ENCODE measurements at regions of chr7 and their contacts with region 1.

Region 1: DNA sequence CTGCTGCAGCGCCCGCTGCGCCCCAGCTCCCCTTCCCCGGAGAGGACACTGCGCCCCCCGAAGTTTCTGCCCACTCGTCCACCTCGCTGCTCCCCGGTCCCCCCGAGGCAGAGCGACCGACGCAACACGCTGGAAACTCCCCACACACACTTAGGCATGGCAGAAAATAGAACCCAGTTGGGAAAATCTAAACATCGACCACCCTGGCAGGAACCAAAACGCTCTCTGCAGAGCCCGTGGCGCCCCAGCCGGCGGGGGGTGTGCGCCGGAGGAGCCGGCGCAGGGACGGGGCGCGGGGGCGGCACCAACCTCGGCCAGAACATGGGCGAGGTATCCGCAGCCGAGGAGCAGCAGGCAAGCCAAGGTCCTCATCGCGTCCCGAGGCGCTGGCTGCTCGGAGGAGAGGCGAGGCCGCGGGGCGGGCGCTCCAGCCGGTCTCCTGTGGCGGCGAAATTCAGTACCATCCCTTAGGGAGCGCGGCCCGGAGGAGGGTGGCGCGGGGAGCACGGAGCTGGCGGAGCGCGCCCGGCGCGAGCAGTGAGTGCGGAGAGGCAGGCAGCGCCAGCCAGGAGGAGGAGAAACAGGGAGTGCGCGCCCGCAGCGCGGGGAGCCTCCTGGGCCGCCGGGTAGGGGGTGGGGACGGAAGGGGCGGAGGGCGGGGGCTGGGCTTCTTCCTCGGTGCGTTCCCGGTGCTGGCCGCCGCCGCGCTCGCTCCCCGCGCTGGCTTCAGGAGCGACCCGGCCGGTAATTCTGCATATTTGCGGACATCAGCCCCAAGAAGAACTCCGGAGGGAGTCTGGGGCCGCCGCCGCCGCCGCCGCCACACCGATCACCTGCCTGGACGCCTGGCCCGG is 789 bp downstream of the PDGFA start:
- DNase-seq: peak; percentile 92

Region 2: DNA sequence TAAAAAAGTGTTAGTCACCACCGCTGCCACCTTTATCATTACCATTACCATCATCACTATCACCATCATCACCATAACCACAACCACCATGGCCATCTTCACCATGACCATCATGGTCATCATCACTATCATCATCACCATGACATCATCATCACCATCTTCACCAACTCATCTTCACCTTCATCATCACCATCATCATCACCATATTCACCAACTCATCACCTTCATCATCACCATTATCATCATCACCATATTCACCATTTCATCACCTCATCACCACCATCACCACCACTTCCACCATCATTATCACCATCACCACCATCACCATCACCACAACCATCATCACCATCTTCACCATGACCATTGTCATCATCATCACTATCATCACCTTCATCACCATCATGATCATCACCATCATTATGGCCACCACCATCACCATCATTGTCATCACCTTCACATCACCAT is 47.3 kb after region 1 on chr7:
- intact Hi-C with region 1: loop called in 1 of 2 experiments (anchors 1 kb)
- DNase-seq: no peak

Region 3: GRCh38 chr7:668139-668931 is 149.5 kb after region 1 on chr7:
- intact Hi-C with region 1: loop called in 1 of 2 experiments (anchors 10 kb)
- DNase-seq: peak; percentile 78

Region 4: DNA sequence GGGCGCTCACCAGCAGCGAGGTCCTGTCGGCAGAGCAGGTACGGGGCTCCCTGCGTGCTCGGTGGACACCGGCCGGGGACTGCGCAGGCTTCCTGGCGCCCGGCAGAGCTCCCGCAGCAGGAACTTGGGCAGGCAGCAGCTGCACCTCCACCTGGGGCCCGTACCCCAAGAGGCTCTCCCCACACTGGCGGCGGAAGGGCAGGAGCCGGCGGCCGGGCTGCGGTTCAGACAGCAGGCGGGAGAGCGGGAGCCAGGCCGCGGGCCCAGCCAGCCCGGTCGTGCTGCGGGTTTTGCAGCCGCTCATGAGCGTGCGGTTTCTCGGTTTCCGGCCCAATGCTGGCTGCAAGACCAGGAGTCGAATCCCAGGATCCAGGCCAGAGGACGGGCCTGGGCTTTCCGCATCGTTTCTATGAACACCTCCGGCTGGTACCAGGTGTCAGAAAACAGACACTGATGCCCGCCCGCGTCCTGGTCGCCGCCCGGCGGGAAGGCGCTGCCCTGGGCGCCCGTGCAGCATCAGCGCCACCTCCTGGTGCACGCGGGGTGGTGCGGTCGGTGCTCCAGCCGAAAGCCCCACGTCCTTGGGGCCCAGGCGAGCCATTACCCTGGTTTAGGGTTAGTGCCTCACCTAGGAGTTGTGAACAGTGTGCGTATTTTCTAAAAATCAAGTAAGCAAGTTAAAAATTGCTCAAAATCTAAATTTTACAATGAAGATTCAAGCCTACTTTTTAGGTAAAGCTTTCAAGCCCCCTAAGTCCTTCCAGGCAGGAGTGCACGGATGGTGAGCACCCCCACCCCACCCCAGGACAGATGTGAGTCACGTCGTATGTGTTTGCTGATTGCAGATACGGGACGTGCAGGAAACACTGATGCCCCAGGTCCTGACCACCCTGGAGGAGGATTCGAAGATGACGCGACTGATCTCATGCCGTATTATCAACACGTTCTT is 255.6 kb after region 1 on chr7:
- intact Hi-C with region 1: loop called (anchors 1 to 5 kb)
- DNase-seq: peak; percentile 89

Measured in posterior vena cava (tissue), 2 donors.